ENCODE measurements at regions of chr6 and their contacts with region 1.

Region 1: DNA sequence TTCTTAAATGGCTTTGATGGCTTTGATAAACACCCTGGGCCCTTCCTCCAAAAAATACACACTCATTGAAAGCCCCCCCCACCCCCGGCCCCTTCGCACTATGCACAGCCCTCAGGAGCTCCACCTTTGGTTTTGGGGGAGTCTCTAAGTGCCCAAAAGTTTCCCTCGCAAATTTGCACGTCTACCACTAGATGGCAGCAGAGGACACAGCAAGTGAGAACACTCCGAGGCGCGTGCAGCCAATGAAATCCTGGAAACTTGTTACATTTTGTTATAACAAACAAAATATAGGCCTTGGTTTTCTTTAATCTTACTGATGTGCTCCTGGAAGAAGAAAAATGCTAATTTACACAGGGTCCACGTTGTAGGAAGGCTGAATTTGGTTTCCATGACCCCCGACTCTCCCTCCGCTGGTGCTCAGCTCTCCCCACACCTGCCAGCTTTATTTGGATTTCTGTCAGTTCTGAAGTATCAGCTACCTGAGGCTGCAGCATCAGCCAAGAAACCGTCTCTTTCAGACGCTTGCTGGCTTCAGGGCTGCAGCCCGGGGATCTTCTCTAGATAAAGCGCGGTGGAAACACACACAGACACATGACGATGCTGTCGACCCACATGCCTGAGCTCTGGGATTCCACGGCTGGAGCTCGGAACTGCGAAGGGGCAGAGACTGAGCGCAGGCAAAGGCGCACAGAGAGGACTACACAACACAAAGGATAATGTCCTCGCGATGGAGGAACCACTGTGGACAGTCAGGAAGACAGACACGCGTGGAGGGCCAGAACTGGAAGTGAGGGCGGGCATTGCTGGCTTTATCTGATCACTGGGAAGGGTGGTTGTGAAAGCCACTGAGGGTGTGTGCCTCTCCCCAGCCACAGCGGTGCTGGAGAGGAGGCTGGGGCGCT is 148.4 kb upstream of the RPS6KA2 start:
- DNase-seq: peak; percentile 88
- H3K4me3 Mint-ChIP-seq: no peak overlapping the region
- H3K27ac Mint-ChIP-seq: no peak overlapping the region
- H3K4me1 Mint-ChIP-seq: peaks cover 3% of the 10 kb centered on the region
- H3K27me3 Mint-ChIP-seq: peaks cover 4% of the 10 kb centered on the region

Region 2: DNA sequence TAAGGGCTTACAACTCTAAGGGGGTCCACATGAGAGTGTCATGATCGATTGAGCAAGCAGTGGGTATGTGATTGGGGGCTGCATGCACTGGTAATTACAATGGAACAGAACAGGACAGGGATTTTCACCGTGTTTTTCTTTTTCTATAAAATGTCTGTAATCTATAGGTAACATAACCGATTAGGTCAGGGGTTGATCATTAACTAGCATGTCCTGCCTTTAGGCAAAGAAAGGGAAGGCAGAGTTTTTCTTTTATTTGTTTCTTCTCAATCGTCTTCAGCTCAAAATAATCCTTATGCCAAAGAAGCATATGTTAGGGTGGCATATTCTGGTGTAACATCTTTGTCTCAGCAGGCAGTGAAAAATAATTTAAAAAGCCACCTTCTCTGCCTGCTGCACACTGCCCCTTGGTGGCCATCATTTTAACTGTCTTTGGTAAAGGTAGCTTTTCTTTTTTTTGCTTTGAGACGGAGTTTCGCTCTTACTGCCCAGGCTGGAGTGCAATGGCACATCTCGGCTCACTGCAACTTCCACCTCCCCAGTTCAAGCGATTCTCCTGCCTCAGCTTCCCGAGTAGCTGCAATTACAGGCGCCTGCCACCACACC is 214.1 kb after region 1 on chr6:
- intact Hi-C with region 1: loop called (anchors 1 kb)
- DNase-seq: peak; percentile 89
- H3K4me3 Mint-ChIP-seq: no peak overlapping the region
- H3K27ac Mint-ChIP-seq: no peak overlapping the region
- H3K4me1 Mint-ChIP-seq: peaks cover 44% of the 10 kb centered on the region
- H3K27me3 Mint-ChIP-seq: no peaks in the 10 kb centered on the region

Region 3: GRCh38 chr6:167141667-167142432 is 366.4 kb after region 1 on chr6:
- intact Hi-C with region 1: loop called (anchors 1 kb)
- DNase-seq: peak; percentile 80
- H3K4me3 Mint-ChIP-seq: no peak overlapping the region
- H3K27ac Mint-ChIP-seq: no peak overlapping the region
- H3K4me1 Mint-ChIP-seq: peaks cover 5% of the 10 kb centered on the region
- H3K27me3 Mint-ChIP-seq: peaks cover 2% of the 10 kb centered on the region

Region 4: GRCh38 chr6:167298153-167298552 is 522.7 kb after region 1 on chr6:
- intact Hi-C with region 1: loop called (anchors 10 kb)
- DNase-seq: no peak
- H3K4me3 Mint-ChIP-seq: no peak overlapping the region
- H3K27ac Mint-ChIP-seq: no peak overlapping the region
- H3K4me1 Mint-ChIP-seq: no peaks in the 10 kb centered on the region
- H3K27me3 Mint-ChIP-seq: no peaks in the 10 kb centered on the region

Measured in activated CD4-positive, alpha-beta T cell treated with anti-CD3 and anti-CD28 coated beads, Interleukin-2, amount 10 ng/mL, durations not matched to agents 24 days and 14 days (primary cell).